SK-N-SH (cell line): ENCODE measurements at regions of chr3 and their contacts with region 1.

Region 1: GRCh38 chr3:156449712-156450574 is 105.0 kb downstream of the SSR3 start:
- DNase-seq: peak; percentile 42
- H3K4me3 ChIP-seq: no peak overlapping the region
- H3K27ac ChIP-seq: no peak overlapping the region
- H3K4me1 ChIP-seq: peaks cover 2 to 9% of the 10 kb centered on the region in 2 experiments
- H3K27me3 ChIP-seq: no peaks in the 10 kb centered on the region
- CTCF ChIP-seq: peak; percentile 68
- EP300 ChIP-seq: no peak
- RAD21 ChIP-seq: peak; percentile 77

Region 2: GRCh38 chr3:156160647-156161046 is 289.3 kb before region 1 on chr3:
- CTCF ChIA-PET with region 1: interaction called, 11 read pairs
- POLR2A ChIA-PET with region 1: no interaction called
- DNase-seq: no peak
- H3K4me3 ChIP-seq: no peak overlapping the region
- H3K27ac ChIP-seq: peak overlapping the region in 1 of 2 experiments; percentile 17; a peak in 1 of 4 replicates
- H3K4me1 ChIP-seq: no peaks in the 10 kb centered on the region; a peak in 1 of 4 replicates
- H3K27me3 ChIP-seq: no peaks in the 10 kb centered on the region
- CTCF ChIP-seq: no peak
- EP300 ChIP-seq: no peak
- RAD21 ChIP-seq: no peak

Region 3: GRCh38 chr3:156291272-156292123 is 158.4 kb before region 1 on chr3:
- CTCF ChIA-PET with region 1: interaction called, 11 read pairs
- POLR2A ChIA-PET with region 1: no interaction called
- DNase-seq: peak; percentile 68
- H3K4me3 ChIP-seq: peak overlapping the region; percentile 80 to 85
- H3K27ac ChIP-seq: peak overlapping the region; percentile 64 to 67
- H3K4me1 ChIP-seq: peaks cover 0 to 17% of the 10 kb centered on the region in 2 experiments; a peak in 1 of 4 replicates
- H3K27me3 ChIP-seq: no peaks in the 10 kb centered on the region
- CTCF ChIP-seq: no peak
- EP300 ChIP-seq: no peak
- RAD21 ChIP-seq: no peak

Region 4: DNA sequence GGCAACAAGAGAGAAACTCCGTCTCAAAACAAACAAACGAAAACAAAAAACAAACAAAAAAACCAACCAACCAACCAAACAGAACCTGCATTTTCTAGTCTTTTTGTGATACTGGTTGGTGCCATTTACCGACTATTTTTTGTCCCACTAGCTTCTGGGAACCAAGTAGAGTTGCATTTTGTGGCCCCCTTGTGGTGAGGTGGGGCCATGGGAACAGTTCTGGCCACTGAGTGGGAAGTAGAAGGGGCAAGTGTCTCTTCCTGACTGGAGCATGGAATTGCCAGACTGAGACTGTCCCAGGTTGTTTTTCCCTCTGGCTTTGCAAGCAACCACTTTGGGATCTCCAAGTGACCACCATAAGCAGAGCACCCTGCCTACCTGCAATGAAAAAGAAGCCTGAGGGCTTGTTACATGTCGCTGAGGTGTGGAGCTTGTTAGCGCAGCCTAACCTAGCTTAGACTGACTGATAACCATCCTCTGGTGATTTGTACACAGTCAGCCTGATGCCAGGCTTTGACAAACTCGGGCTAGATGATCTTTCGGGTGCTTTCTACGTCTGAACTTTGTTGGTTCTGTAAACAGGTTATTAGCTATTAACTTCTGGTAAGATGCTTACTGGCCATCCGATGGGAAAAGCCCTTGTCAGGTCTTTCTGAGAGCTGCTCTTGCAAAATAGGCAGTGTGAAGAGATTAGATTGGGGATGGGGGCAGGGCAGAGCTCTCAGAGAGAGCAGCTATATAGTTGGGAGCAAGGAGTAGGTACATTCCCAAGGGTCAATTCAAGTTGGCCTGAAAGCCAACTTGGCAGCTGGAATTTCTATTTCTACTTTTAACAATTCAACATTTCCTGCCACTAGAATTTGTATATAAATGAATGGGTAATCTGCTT is 67.2 kb before region 1 on chr3:
- CTCF ChIA-PET with region 1: interaction called, 14 read pairs
- POLR2A ChIA-PET with region 1: no interaction called
- DNase-seq: no peak
- H3K4me3 ChIP-seq: no peak overlapping the region
- H3K27ac ChIP-seq: peak overlapping the region; percentile 48 to 87; a peak in 3 of 4 replicates
- H3K4me1 ChIP-seq: peaks cover 25 to 29% of the 10 kb centered on the region in 2 experiments; a peak in 3 of 4 replicates
- H3K27me3 ChIP-seq: no peaks in the 10 kb centered on the region
- CTCF ChIP-seq: peak; percentile 58
- EP300 ChIP-seq: no peak
- RAD21 ChIP-seq: peak; percentile 40

Region 5: GRCh38 chr3:156413293-156413892 is 36.5 kb before region 1 on chr3:
- CTCF ChIA-PET with region 1: no interaction called
- POLR2A ChIA-PET with region 1: no interaction called
- DNase-seq: no peak
- H3K4me3 ChIP-seq: no peak overlapping the region
- H3K27ac ChIP-seq: no peak overlapping the region; a peak in 1 of 4 replicates
- H3K4me1 ChIP-seq: peaks cover 0 to 17% of the 10 kb centered on the region in 2 experiments; a peak in 2 of 4 replicates
- H3K27me3 ChIP-seq: no peaks in the 10 kb centered on the region
- CTCF ChIP-seq: no peak
- EP300 ChIP-seq: no peak
- RAD21 ChIP-seq: no peak

Region 6: DNA sequence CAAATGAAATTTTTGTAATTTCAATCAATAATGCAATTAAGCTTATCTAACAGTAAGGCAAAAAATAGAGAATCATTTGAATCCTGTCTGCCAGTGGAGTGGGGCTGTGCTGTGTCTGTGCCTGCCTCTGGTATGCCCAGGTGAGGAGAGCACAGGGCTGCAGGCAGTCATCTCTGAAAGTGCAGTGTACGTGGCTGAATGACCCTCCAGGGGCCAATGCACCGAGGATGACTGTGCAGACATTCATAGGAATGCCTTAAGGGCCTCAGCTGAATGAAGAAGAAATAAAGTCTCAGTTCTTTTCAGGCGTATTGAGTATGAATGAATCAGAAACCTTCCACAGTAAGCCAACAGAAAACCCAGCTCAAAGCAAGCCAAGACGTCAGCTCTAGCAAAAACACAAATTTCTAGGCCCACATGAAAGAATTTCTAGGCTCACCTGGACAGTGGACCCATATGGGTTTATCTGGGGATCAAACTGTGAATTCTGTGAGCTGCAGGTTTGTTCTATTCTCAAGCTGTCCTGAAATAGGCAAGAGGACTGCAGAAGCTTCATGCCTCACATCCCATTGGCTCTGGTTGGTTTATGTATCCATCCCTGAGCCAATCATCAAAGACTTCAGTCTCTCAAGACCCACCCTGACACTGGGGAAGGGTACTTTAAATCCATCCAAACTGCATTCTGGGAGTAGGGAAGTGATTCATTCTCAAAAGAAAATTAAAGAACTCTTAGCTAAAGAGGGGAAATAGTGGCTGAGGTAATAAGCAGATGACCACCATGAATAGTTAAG is 18.4 kb before region 1 on chr3:
- CTCF ChIA-PET with region 1: interaction called, 10 read pairs
- POLR2A ChIA-PET with region 1: no interaction called
- DNase-seq: no peak
- H3K4me3 ChIP-seq: no peak overlapping the region
- H3K27ac ChIP-seq: no peak overlapping the region
- H3K4me1 ChIP-seq: peaks cover 8 to 24% of the 10 kb centered on the region in 2 experiments; a peak in 3 of 4 replicates
- H3K27me3 ChIP-seq: no peaks in the 10 kb centered on the region
- CTCF ChIP-seq: no peak
- EP300 ChIP-seq: no peak
- RAD21 ChIP-seq: no peak

Region 7: DNA sequence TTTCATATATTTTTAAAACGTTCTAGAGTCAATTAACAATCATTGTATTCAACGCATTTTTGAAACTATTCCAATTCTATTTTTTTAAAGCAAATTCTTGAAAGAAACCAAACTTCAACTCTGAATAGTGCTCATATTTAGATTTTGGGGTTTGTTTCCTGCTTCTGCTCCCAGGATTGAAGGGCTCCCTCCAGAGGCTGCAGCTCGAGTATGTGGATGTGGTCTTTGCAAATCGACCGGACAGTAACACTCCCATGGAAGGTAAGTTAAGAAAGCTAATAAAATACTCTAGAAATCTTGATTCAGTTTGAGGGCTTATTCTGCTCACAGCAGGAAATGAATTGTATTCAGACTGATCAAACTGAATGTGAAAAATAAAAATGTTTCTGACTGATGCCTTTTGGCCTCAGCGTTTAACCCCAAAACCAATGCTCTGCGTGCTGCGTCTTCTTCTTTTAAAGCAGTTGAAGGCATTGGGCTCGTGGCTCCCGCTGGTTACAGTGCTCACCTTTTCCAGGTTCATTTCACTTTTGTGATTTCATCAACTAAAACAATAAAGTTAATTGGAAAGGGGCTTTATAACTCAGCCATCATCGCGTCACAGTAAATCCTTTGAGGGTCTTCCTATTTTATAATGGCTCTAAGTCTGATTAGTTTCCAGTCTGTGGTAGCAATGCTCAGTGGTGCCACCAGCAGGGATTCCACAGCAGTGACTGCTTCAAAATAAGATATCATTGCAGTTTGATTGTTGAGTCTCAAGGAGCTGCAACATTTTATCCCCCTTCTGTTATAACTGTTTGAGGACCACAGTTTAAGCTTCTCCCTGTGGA is 24.8 kb after region 1 on chr3:
- CTCF ChIA-PET with region 1: interaction called, 12 read pairs
- POLR2A ChIA-PET with region 1: no interaction called
- DNase-seq: no peak
- H3K4me3 ChIP-seq: no peak overlapping the region; a peak in 1 of 4 replicates
- H3K27ac ChIP-seq: peak overlapping the region; percentile 5 to 50; a peak in 1 of 4 replicates
- H3K4me1 ChIP-seq: peaks cover 4 to 25% of the 10 kb centered on the region in 2 experiments; a peak in 3 of 4 replicates
- H3K27me3 ChIP-seq: no peaks in the 10 kb centered on the region
- CTCF ChIP-seq: peak; percentile 60
- EP300 ChIP-seq: no peak
- RAD21 ChIP-seq: peak; percentile 46

Region 8: DNA sequence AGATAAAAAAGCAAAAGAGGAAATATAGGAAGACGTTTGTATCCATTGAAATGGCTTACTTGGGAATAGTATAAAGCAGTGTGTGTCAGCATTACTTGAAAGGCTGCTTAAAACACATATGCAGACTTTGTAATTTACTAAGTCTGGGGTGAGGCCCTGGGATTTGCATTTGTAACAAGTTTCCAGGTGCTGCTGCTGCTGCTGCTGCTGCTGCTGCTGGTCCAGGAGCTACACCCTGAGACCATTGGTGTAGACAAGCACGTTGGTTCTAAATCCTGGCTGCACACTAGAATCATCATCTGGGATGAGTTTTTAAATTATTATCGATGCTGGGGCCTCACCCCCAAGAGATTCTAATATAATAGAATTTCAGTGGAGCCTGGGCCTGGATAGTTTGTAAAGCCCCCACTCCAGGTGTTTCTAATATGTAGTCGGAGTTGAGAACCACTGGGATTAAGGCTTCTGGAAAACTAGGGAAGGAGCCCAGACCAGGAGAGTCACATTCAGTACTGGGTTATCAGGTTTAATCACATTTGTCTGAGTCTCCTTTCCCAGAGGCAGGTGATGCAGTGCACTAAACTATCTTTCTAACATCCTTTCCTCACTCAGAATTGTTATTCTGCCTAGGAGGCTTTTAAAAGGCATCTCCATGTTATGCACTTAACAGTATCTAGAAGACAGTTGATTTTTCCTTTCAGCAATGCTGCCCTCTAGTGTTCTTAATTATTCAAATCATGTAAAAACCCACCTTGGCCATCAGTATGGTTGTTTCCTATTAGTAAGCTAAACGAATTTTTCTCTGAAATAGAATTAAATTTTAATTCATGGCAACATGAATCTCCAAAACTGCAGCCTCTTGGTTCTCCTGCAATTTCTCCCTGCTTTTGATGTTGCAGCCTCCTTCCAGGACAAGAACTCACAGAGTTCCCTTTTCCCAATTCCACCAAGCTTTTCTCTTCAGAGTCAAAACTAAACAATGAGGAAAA is 59.5 kb after region 1 on chr3:
- CTCF ChIA-PET with region 1: interaction called, 26 read pairs
- POLR2A ChIA-PET with region 1: no interaction called
- DNase-seq: peak; percentile 63
- H3K4me3 ChIP-seq: no peak overlapping the region; a peak in 1 of 4 replicates
- H3K27ac ChIP-seq: peak overlapping the region in 1 of 2 experiments; percentile 66; a peak in 2 of 4 replicates
- H3K4me1 ChIP-seq: peaks cover 5 to 9% of the 10 kb centered on the region in 2 experiments; a peak in 3 of 4 replicates
- H3K27me3 ChIP-seq: no peaks in the 10 kb centered on the region
- CTCF ChIP-seq: peak; percentile 74
- EP300 ChIP-seq: no peak
- RAD21 ChIP-seq: peak; percentile 85

Region 9: DNA sequence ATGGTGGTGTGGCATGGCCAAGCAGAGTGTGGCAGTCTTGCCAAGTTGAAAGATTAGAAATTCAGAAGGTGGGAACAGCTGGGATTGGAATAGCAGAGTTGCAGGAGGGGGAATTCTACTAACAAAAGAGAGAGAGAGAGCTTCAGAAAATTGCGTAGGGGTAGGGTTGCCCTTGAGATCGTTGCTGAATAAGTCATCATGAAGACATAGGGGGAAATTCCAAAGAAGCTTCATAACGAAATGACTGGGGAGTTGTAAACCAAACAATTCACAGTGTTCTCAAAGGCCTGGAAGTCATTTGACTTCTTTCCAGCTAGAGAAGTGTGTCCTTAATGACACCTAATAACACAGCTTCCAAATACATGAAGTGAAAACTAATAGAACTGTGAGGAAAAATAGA is 198.1 kb after region 1 on chr3:
- CTCF ChIA-PET with region 1: no interaction called
- POLR2A ChIA-PET with region 1: no interaction called
- DNase-seq: no peak
- H3K4me3 ChIP-seq: no peak overlapping the region
- H3K27ac ChIP-seq: no peak overlapping the region
- H3K4me1 ChIP-seq: peaks cover 0 to 7% of the 10 kb centered on the region in 2 experiments; a peak in 1 of 4 replicates
- H3K27me3 ChIP-seq: no peaks in the 10 kb centered on the region
- CTCF ChIP-seq: no peak
- EP300 ChIP-seq: no peak
- RAD21 ChIP-seq: no peak